Left ventricle myocardium superior (tissue), 1 donor: ENCODE measurements at regions of chr12 and their contacts with region 1.

Region 1: DNA sequence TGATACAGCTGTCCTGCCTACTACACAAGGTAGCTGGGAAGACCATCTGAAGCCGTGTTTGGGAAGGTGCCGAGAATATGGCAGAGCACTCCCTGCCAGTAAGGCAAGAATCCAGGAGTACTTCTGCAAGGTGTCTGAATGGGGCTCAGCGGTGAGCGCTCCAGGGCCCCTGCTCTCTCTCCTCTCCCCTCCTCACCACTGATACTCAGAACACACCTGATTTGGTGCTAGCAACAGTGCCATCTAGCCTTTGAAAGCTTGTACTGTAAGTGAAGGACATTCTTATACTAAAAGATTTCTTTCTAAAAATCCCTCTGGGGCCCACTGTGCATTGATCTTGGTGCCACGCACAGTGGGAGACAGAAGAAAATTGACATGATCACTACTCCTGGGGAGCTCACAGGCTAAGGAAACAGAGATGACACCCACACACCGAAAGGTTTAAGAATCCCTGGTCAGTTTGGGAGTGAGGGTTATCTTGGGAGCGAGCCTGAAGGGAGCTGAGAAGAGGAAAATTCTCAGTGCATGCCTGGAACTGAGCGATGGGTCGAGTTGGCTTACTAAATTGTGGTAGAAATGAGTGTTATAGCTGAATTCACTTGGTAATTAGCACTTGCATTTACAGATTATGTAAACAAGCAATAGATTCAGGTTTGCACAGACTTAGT is 216.9 kb downstream of the NTF3 start:
- DNase-seq: no peak
- ATAC-seq: peak; percentile 61

Region 2: GRCh38 chr12:5428332-5429221 is 220.2 kb before region 1 on chr12:
- intact Hi-C with region 1: loop called (anchors 5 kb)
- DNase-seq: no peak
- ATAC-seq: peak; percentile 38

Region 3: DNA sequence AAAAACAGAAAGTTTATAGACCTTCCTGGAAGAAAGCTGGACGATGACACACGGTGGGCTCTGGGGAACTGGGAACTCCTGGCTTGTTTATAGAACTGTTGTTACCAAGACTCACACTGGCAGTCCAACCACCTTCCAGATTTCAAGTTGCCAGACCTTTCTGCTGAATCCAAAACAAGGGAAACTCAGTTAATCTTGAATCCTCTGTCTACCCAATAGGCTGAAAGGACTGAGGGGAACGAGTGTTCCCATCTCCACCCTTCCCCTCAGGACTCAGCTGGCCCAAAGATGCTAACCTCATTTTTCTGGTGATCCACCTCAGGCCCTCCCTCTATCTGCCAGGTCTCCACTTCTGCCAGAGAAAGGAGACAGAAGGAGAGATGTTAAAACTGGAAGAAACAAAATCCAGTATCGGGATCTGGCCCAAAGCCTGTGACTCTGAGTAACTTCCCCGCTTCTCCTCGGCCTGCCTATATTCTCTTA is 64.8 kb after region 1 on chr12:
- intact Hi-C with region 1: no loop called
- DNase-seq: no peak
- ATAC-seq: peak; percentile 85

Region 4: GRCh38 chr12:5746036-5746908 is 97.4 kb after region 1 on chr12:
- intact Hi-C with region 1: no loop called
- DNase-seq: no peak
- ATAC-seq: no peak

Region 5: GRCh38 chr12:5846950-5847349 is 198.1 kb after region 1 on chr12:
- intact Hi-C with region 1: no loop called
- DNase-seq: no peak
- ATAC-seq: no peak